GM12878 (cell line): ENCODE measurements at regions of chr5 and their contacts with region 1.

Region 1: DNA sequence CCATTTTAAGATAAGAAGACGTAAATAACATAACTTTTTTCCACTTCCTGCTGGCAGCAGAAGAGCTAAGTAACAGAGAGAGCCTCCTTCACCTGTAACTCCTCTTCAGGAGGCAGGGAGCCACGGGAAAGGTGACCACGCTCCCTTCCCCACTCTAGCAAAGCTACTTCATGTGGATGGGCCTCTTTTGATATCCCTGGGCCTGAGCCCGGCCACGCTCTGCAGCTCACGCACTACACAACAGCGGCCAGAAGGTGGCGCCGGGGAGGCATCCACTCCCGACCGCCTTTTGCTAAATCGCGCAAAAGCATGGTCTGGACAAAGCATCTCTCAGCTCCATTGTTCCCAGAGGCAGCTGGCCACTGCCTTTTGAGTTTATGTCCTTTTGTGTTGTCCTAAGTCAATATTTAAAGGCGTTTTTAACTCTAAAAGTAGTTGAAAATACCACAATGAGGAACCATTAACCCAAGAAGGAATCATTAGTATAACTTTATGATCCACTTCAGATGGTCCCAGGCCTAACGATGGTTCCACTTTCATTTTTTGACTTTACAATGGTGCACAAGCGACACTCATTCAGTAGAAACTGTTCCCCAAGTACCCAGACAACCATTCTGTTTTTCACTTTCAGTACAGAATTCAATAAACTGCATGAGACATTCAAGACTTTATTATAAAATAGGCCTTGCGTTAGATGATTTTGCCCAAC is 23.6 kb downstream of the CMBL start:
- DNase-seq: peak; percentile 40
- ATAC-seq: peak; percentile 99
- H3K4me3 ChIP-seq: no peak overlapping the region
- H3K27ac ChIP-seq: no peak overlapping the region; the same call in 1 of the 2 replicates
- H3K4me1 ChIP-seq: peaks cover 17% of the 10 kb centered on the region
- H3K27me3 ChIP-seq: no peaks in the 10 kb centered on the region
- CTCF ChIP-seq: peak; percentile 86 to 96 (median 95)
- EP300 ChIP-seq: no peak
- POLR2A ChIP-seq: no peak
- RAD21 ChIP-seq: peak; percentile 80

Region 2: GRCh38 chr5:10353241-10354047 is 69.4 kb after region 1 on chr5 and contains the start of gene MARCHF6:
- CTCF ChIA-PET with region 1: interaction called, 26 read pairs
- POLR2A ChIA-PET with region 1: interaction called, 3 read pairs
- RAD21 ChIA-PET with region 1: interaction called, 6 read pairs
- SMC1A ChIA-PET with region 1: interaction called, 5 read pairs
- in situ Hi-C with region 1: no loop called
- intact Hi-C with region 1: no loop called
- DNase-seq: peak; percentile 77
- ATAC-seq: peak; percentile 85
- H3K4me3 ChIP-seq: peak within 1 kb of the TSS; percentile 97
- H3K27ac ChIP-seq: peak within 1 kb of the TSS; percentile 97
- H3K4me1 ChIP-seq: peaks cover 3% of the 10 kb centered on the region; the same call in 1 of the 2 replicates
- H3K27me3 ChIP-seq: no peaks in the 10 kb centered on the region
- CTCF ChIP-seq: no peak
- EP300 ChIP-seq: no peak
- POLR2A ChIP-seq: peak; percentile 97
- RAD21 ChIP-seq: 0 out of 2 replicates have a peak, but pooled peaks have one; percentile 8
- polyA plus RNA-seq, gene MARCHF6: 59.0 to 74.3 TPM

Region 3: DNA sequence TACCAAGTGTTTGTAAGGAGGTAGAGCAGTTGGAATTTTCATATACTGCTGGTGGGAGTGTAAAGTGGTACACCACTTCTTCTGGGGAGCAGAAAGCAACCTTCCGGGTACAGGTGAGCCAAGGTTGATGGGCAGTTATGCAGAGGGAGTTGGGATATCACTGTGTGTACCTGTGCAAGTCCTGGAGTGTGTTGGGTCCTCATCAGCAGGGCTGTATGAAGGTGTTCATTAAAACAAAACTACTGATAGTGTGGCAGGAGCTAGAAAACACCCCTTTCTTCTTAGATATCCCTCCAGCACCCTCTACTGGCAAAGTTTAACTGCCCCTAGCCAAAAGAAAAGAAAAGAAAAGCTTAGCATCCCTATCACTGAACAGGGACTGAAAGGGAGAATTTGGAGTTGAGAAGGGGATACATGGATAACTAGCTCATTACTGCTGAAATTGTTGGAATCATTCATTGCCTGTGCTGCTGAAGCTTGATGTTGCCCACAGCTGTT is 80.2 kb after region 1 on chr5:
- CTCF ChIA-PET with region 1: interaction called, 34 read pairs
- POLR2A ChIA-PET with region 1: no interaction called
- RAD21 ChIA-PET with region 1: interaction called, 18 read pairs
- SMC1A ChIA-PET with region 1: interaction called, 14 read pairs
- in situ Hi-C with region 1: no loop called
- intact Hi-C with region 1: loop called (anchors 1 kb)
- DNase-seq: no peak
- ATAC-seq: peak; percentile 72
- H3K4me3 ChIP-seq: no peak overlapping the region
- H3K27ac ChIP-seq: no peak overlapping the region
- H3K4me1 ChIP-seq: peaks cover 6% of the 10 kb centered on the region
- H3K27me3 ChIP-seq: no peaks in the 10 kb centered on the region
- CTCF ChIP-seq: peak in 2 of 3 experiments; percentile 29 to 32; a peak in 3 of 6 replicates
- EP300 ChIP-seq: no peak
- POLR2A ChIP-seq: no peak
- RAD21 ChIP-seq: peak; percentile 39

Region 4: GRCh38 chr5:10401498-10401897 is 117.4 kb after region 1 on chr5:
- CTCF ChIA-PET with region 1: interaction called, 3 read pairs
- POLR2A ChIA-PET with region 1: no interaction called
- RAD21 ChIA-PET with region 1: interaction called, 5 read pairs
- SMC1A ChIA-PET with region 1: interaction called, 4 read pairs
- in situ Hi-C with region 1: no loop called
- intact Hi-C with region 1: loop called (anchors 1 kb)
- DNase-seq: peak; percentile 33
- ATAC-seq: peak; percentile 92
- H3K4me3 ChIP-seq: no peak overlapping the region
- H3K27ac ChIP-seq: peak overlapping the region; percentile 35; the same call in 1 of the 2 replicates
- H3K4me1 ChIP-seq: peaks cover 10% of the 10 kb centered on the region; the same call in 1 of the 2 replicates
- H3K27me3 ChIP-seq: no peaks in the 10 kb centered on the region
- CTCF ChIP-seq: no peak
- EP300 ChIP-seq: no peak
- POLR2A ChIP-seq: no peak
- RAD21 ChIP-seq: no peak

Region 5: DNA sequence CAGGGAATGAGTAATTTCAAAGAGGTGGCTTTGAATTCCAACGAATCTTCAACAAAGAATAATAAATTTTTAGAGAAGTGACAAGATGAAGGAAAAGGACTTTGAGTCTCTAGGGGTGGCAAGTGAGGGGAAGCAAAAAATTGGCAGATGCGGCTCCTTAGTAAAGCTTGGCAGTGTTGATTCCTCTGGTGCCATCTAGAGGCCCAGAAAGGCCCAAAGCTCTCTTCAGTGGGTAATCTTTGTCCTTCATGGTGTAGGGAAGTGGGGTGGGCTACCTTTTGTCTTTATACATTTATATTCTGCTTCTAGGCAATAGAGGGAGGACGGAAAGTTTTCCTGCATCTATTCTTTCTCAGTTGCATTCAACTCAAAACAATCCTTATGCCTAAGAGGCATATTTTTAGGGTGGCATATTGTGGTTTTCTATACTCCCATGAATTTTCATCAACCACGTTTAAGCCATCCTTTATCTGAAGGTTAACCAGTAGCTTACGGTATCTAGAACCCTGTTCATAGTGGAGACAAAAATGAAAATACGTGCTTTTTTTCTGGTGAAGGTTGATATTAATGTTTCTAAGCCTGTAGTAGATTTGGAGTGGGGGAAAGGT is 140.1 kb after region 1 on chr5:
- CTCF ChIA-PET with region 1: interaction called, 43 read pairs
- POLR2A ChIA-PET with region 1: no interaction called
- RAD21 ChIA-PET with region 1: interaction called, 25 read pairs
- SMC1A ChIA-PET with region 1: interaction called, 13 read pairs
- in situ Hi-C with region 1: loop called (anchors 5 kb)
- intact Hi-C with region 1: loop called (anchors 1 kb)
- DNase-seq: no peak
- ATAC-seq: peak; percentile 81
- H3K4me3 ChIP-seq: no peak overlapping the region
- H3K27ac ChIP-seq: no peak overlapping the region
- H3K4me1 ChIP-seq: no peaks in the 10 kb centered on the region
- H3K27me3 ChIP-seq: no peaks in the 10 kb centered on the region
- CTCF ChIP-seq: peak; percentile 40 to 47 (median 40)
- EP300 ChIP-seq: no peak
- POLR2A ChIP-seq: no peak
- RAD21 ChIP-seq: peak; percentile 43

Region 6: DNA sequence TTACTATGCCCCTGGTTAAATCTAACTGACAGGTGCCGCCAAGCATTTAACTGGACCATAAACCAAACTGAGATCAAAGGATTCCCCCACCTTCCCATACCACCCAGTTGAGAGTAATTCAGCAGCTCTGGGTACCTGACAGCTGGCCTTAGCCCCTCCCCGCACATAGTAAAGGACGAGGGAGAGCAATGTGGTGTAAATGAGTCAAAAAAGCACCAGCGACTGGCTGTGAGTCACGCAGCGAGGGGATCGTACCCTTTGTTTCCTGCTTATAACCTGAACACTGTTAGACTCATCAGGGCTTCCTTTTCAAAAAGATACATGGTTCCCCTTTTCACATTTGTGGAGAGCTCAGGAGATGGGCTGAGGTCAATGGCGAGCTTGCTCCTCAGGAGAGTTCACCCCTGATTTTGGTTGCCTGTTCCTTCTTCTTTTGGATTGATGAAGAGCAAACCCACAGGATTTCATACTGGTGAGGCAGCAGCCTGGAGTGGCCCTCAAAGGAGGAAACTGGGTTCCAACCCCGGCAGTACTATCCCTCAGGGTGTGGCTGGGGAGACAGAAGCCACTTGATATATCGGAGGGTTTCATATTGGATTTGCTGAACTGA is 351.3 kb after region 1 on chr5:
- CTCF ChIA-PET with region 1: no interaction called
- POLR2A ChIA-PET with region 1: no interaction called
- RAD21 ChIA-PET with region 1: no interaction called
- SMC1A ChIA-PET with region 1: no interaction called
- in situ Hi-C with region 1: no loop called
- intact Hi-C with region 1: loop called (anchors 5 kb)
- DNase-seq: peak; percentile 94
- ATAC-seq: peak; percentile 66
- H3K4me3 ChIP-seq: peak overlapping the region; percentile 51
- H3K27ac ChIP-seq: peak overlapping the region; percentile 93
- H3K4me1 ChIP-seq: peaks cover 59% of the 10 kb centered on the region
- H3K27me3 ChIP-seq: no peaks in the 10 kb centered on the region
- CTCF ChIP-seq: no peak
- EP300 ChIP-seq: peak; percentile 89 to 98
- POLR2A ChIP-seq: peak; percentile 39; the same call in 1 of the 2 replicates
- RAD21 ChIP-seq: peak; percentile 5; the same call in 1 of the 2 replicates